Right ventricle myocardium inferior (tissue), 1 donor: ENCODE measurements at regions of chr3 and their contacts with region 1.

Region 1: DNA sequence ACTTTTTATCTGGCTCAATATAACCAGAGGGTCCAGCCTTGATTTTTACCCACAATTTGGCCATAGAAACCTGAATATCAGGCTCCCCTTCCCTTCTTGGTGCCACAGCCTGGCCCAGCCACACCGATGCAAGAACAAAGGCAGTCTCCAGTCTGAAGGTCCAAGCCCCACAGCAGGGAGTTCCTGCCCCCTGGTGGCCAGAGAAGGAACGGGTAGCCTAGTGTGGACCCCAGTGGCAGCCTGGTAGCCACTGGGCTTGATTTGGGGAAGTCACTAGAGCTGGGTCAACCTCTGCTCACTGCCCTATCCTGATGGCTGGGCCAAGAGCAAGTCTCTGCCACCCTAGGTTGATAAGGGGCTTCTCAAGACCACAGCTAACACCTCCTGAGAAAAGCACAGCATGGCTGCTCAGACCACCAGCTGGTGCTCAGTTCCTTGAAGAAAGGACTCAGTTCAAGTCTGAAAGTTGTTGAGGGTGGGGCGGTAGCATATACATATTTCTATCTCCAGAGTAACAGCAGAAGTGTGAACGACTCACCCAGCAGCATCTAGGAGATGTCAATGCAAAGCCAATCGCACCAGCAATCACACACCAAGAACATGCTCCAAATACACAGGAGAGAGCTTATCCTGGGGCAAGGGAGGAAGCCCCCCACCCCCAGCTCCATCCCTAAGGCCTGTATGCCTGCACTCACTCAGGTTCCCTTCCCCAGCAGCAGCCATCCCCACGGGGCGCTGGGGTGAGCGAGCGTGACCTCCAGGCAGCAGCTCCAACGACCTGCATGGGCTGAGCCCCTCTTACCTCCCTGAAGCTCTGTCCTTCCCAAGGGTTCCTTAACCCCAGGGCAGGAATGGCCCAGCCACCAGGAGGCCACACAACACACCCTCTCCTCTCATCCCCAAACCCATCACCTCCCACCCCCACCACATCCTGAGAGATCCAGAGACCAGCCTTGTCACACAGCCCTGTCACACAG is 7.6 kb downstream of the PFKFB4 start:
- DNase-seq: peak; percentile 87
- ATAC-seq: peak; percentile 90

Region 2: DNA sequence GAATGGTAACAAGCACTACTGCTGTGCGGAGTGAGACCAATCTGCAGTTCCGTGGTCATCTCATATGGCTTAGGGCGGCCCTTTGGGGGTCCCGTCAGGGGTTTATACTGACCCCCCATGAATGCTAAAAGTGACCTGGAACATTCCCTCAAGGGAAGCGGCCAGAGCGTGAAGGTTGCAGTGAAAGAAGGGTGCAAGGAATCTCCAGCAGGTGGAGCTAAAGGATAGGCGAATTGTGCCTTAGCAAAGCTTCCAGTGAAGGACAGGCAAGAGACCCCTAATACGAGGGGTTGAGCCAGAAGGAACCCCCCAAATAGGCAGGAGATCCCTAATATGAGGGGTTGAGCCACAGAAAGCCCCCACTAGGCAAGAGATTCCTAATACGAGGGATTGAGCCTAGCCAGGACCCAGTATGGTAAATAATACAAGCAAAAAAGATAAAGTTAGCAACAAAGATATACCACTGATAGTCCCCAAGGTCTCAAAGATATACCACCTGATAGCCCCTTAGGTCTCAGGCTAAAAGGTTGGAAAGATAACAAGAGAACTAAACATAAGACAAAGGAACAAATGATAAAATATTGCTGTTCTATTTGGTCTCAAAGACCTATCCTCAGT is 275.3 kb before region 1 on chr3:
- intact Hi-C with region 1: loop called (anchors 5 kb)
- DNase-seq: no peak
- ATAC-seq: peak; percentile 58

Region 3: GRCh38 chr3:48400824-48401433 is 148.1 kb before region 1 on chr3:
- intact Hi-C with region 1: loop called (anchors 5 kb)
- DNase-seq: no peak
- ATAC-seq: no peak

Region 4: DNA sequence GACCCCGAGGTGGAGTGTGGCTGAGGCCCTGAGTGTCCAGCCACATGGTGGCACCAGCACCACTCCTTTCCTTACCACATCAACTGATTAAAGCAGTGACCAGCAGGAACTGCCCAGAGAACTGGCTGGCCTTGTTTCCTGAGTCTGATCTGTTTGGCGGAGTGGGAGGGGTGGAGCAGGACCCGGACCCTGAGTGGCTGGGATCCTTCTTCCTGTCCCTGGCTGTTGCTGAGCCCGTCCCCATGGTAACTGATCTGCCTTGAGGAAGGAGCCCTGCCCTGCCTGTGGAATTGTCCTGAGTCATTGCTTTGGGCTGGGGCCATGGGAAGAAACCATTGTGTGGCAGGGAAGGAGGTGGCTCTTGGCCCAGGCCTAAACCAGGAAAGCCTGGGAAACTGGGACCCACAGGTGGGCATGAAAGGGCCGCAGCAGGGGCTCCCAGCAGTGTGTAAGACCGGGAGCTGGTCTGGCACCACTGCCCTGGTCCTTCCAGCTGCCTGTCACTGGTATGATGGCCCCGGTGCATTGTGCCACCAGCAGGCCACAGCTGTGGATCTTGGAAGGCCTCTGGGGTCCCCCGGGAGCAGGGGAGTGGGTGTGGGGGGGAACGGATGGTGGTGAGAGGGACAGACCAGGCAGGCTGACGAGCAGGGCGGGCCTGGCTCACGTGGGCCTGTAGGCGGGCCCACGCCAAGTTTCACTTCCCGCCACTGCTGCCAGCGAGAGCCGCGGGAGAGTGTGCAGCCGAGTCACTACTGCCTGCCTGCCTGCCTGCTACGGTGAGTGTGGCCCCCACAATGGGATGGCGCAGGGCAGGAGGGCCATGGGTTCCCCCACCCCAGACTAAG is 83.3 kb before region 1 on chr3:
- intact Hi-C with region 1: loop called (anchors 1 kb)
- DNase-seq: peak; percentile 97
- ATAC-seq: peak; percentile 95

Region 5: DNA sequence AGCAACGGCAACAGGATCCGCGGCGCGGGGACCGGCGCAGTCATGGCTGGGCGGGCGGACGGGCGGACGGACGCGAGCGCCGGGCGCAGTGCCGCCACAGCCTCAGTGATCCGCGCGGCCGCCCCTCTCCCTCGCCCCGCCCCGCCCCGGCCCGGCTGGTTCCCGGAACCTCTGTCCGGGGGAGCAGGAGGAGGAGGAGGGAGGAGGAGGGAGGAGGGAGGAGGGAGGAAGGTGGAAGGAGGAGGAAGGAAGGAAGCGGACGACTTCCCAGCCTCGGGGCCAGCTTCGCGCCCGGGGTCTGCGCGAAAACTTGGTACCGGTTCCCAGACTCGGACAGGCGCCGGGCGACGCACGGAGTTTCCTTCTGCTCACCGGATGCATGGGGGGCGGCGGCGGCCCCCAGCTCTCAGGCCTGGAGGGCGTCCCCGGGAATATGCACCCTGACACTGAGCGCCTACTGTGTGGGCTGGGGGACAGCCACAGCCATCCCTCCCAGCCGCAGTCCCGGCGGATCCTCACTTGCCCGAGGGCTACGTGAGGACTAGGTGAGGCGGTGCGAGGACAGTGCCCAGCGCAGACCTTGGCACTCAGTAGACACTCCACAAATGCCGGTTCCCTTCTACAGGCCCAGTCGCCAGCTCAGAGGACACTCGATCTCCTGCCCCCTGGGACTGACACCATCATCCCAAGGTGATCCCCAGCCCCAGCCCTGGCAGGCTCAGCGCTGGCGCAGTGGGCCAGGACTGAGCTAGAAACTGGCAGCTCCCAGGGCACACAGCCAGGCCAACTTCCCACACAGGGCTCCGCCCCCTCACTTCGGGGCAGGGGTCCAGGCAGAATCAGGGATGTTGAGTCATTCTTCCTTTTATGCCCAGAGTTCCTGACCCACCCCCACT is 44.7 kb before region 1 on chr3 and contains the start of gene SHISA5:
- intact Hi-C with region 1: loop called (anchors 5 kb)
- DNase-seq: peak; percentile 92
- ATAC-seq: peak; percentile 91
- total RNA-seq, gene SHISA5: 57.3 TPM